ENCODE measurements at regions of chr11 and their contacts with region 1.

Region 1: GRCh38 chr11:123231256-123231655 is 36.2 kb upstream of the CLMP start:
- DNase-seq: peak; percentile 83 to 90
- H3K4me3 ChIP-seq: no peak overlapping the region
- H3K4me3 Mint-ChIP-seq: peak overlapping the region; percentile 6
- H3K27ac Mint-ChIP-seq: peak overlapping the region; percentile 81
- H3K4me1 ChIP-seq: peaks cover 55% of the 10 kb centered on the region
- H3K4me1 Mint-ChIP-seq: peaks cover 24% of the 10 kb centered on the region
- H3K27me3 ChIP-seq: no peaks in the 10 kb centered on the region
- H3K27me3 Mint-ChIP-seq: no peaks in the 10 kb centered on the region
- CTCF ChIP-seq: no peak

Region 2: GRCh38 chr11:123129920-123130319 is 101.3 kb before region 1 on chr11:
- CTCF ChIA-PET with region 1: no interaction called
- POLR2A ChIA-PET with region 1: no interaction called
- intact Hi-C with region 1: no loop called
- DNase-seq: no peak
- H3K4me3 ChIP-seq: no peak overlapping the region
- H3K4me3 Mint-ChIP-seq: no peak overlapping the region
- H3K27ac Mint-ChIP-seq: no peak overlapping the region
- H3K4me1 ChIP-seq: no peaks in the 10 kb centered on the region
- H3K4me1 Mint-ChIP-seq: no peaks in the 10 kb centered on the region
- H3K27me3 ChIP-seq: no peaks in the 10 kb centered on the region
- H3K27me3 Mint-ChIP-seq: no peaks in the 10 kb centered on the region
- CTCF ChIP-seq: no peak

Region 3: DNA sequence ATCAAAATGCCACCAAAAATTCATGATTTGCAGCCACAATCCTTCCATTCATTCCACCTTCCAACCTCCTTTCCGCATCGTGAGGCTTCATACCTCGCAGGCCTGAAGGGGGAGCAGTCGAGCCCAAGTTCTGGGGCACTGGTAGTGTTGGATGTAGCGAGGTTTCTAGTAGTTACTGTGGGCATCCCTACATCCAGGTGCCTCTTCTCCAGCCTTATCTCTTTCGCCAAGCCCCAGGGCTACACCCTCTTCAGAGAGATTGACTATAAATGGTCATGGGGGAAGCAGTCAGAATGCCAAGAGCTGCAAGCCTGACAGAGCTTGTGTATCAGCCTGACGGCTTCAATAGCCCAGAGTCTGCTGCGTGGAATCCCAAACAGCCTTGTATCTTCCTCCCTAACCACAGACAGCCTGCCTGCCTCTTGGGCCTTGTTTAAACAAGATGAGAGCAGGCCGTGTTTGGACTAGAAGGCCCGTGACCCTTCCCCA is 65.1 kb before region 1 on chr11:
- CTCF ChIA-PET with region 1: interaction called, 5 read pairs
- POLR2A ChIA-PET with region 1: interaction called, 5 read pairs
- intact Hi-C with region 1: loop called (anchors 1 kb)
- DNase-seq: peak; percentile 79 to 84
- H3K4me3 ChIP-seq: no peak overlapping the region
- H3K4me3 Mint-ChIP-seq: no peak overlapping the region
- H3K27ac Mint-ChIP-seq: peak overlapping the region; percentile 33
- H3K4me1 ChIP-seq: no peaks in the 10 kb centered on the region
- H3K4me1 Mint-ChIP-seq: peaks cover 10% of the 10 kb centered on the region
- H3K27me3 ChIP-seq: no peaks in the 10 kb centered on the region
- H3K27me3 Mint-ChIP-seq: no peaks in the 10 kb centered on the region
- CTCF ChIP-seq: peak; percentile 80 to 90

Region 4: DNA sequence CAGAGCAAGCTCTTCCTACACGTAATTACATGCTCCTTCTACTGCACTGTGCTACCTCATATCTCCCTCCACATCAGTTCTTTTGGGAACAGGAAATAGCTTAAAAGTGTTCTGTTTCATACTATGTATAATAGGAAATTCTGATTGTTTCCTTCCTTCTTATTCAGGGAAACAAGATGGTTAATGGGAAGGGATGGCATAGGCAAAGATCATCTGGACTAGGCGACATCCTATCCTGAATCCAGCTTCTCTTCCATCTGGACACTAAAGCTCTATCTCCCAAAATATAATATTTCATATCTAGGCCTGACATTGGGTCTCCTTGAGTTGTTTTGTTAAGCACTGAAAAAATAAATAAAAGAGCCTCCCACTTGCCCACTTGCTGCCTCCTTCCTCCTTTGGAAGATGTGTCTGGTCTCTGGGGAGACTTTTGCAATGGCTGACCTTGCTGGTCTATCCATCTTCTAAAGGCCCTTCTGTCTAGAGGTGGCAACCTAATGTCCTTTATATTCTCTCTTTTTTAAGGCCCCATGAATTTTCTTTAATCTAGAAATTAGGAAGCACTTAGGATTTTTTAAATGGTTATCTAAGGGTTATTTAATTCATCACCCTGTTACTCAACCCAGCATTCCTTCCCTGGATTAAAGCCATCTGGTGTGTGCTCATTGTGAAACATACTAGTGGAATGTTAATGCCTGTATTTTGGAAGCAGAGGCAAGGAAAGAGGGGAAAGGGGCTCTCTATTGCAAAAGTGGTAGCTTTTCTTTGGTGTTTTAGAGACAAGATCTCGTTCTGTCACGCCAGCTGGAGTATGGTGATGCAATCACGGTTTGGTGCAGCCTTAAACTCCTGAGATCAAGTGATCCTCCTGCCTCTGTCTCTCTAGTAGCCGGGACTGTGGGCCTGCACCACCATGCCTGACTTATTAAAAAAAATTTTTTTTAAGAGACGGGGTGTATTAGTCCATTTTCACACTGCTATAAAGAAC is 56.8 kb before region 1 on chr11:
- CTCF ChIA-PET with region 1: interaction called, 6 read pairs
- POLR2A ChIA-PET with region 1: no interaction called
- intact Hi-C with region 1: loop called (anchors 1 kb)
- DNase-seq: peak; percentile 69 to 78
- H3K4me3 ChIP-seq: no peak overlapping the region
- H3K4me3 Mint-ChIP-seq: no peak overlapping the region
- H3K27ac Mint-ChIP-seq: peak overlapping the region; percentile 91
- H3K4me1 ChIP-seq: peaks cover 18% of the 10 kb centered on the region
- H3K4me1 Mint-ChIP-seq: peaks cover 13% of the 10 kb centered on the region
- H3K27me3 ChIP-seq: no peaks in the 10 kb centered on the region
- H3K27me3 Mint-ChIP-seq: no peaks in the 10 kb centered on the region
- CTCF ChIP-seq: no peak

Region 5: DNA sequence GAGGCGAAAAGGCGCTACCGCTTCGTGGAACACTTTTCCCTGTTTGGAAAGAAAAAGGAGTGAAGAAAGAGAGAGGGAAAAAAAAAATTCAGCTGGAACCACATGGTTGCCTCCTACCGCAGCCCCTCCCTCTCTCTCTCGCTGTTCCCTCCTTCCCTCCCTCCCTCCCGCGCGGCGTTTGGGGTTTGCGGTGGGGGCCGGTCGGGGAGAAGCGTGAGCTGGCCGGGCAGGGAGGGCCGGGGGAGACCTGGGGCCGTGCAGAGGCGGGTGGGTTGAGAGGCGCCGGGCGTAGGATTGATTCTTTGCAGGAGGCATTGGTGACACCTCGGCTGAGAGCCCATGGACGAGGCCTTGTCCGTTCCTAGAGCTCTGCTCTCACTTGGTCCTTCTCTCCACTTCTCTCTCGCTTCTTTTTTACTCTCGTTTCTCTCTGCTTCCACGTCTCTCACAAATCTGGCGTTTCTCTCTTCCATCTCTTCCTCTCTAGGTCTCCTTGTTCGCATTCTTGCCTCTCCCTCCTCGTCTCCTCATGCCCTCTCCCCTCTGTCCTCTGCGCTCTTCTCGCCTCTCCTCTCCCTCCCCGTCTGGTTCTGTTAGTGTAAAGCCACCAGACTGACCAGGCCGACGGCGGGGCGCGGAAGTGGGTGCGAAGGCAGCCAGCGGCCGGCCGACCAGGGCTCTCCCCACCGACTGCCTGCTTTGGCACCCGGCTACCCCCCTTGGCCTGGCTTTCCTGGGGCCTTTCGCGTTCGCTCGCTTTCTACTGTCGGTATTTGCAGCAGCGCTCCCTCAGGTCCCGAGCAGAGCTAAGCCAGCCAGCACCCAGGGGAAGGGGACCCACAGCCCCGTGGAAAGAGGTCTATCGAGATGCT is 35.8 kb before region 1 on chr11 and contains the start of gene CLMP:
- CTCF ChIA-PET with region 1: no interaction called
- POLR2A ChIA-PET with region 1: interaction called, 5 read pairs
- intact Hi-C with region 1: loop called (anchors 1 kb)
- DNase-seq: peak; percentile 71 to 73
- H3K4me3 ChIP-seq: peak within 1 kb of the TSS; percentile 58
- H3K4me3 Mint-ChIP-seq: peak within 1 kb of the TSS; percentile 75
- H3K27ac Mint-ChIP-seq: peak within 1 kb of the TSS; percentile 43
- H3K4me1 ChIP-seq: peaks cover 21% of the 10 kb centered on the region
- H3K4me1 Mint-ChIP-seq: peaks cover 17% of the 10 kb centered on the region
- H3K27me3 ChIP-seq: no peaks in the 10 kb centered on the region
- H3K27me3 Mint-ChIP-seq: peaks cover 5% of the 10 kb centered on the region
- CTCF ChIP-seq: no peak
- total RNA-seq, gene CLMP: 44.0 and 58.9 TPM in 2 replicates

Region 6: DNA sequence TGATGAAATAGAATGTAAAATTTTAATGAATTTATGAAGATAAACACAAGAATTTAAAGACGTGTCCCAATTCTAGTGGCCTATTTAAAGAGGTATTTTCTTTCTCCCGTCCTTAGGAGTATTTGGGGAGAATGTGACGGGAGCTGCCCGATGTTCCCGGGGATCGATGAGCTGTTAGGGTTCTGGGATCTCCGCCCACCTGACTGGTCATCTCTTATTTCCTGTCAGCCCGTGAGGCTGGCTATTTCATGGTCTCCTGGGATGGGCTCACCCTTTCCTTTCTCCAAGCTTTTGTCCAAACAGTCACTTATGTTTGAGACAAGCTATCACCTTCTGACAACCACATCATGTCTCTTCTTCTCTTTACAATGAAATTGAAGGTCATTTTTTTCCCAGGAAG is 19.3 kb before region 1 on chr11:
- CTCF ChIA-PET with region 1: no interaction called
- POLR2A ChIA-PET with region 1: no interaction called
- intact Hi-C with region 1: loop called (anchors 2 kb)
- DNase-seq: no peak
- H3K4me3 ChIP-seq: no peak overlapping the region
- H3K4me3 Mint-ChIP-seq: no peak overlapping the region
- H3K27ac Mint-ChIP-seq: no peak overlapping the region
- H3K4me1 ChIP-seq: peaks cover 14% of the 10 kb centered on the region
- H3K4me1 Mint-ChIP-seq: peaks cover 24% of the 10 kb centered on the region
- H3K27me3 ChIP-seq: no peaks in the 10 kb centered on the region
- H3K27me3 Mint-ChIP-seq: no peaks in the 10 kb centered on the region
- CTCF ChIP-seq: no peak

Region 7: GRCh38 chr11:123218451-123218850 is 12.8 kb before region 1 on chr11:
- CTCF ChIA-PET with region 1: interaction called, 5 read pairs
- POLR2A ChIA-PET with region 1: interaction called, 3 read pairs
- intact Hi-C with region 1: loop called (anchors 1 kb)
- DNase-seq: no peak
- H3K4me3 ChIP-seq: no peak overlapping the region
- H3K4me3 Mint-ChIP-seq: peak overlapping the region; percentile 32
- H3K27ac Mint-ChIP-seq: peak overlapping the region; percentile 77
- H3K4me1 ChIP-seq: peaks cover 22% of the 10 kb centered on the region
- H3K4me1 Mint-ChIP-seq: peaks cover 47% of the 10 kb centered on the region
- H3K27me3 ChIP-seq: no peaks in the 10 kb centered on the region
- H3K27me3 Mint-ChIP-seq: no peaks in the 10 kb centered on the region
- CTCF ChIP-seq: no peak

Region 8: DNA sequence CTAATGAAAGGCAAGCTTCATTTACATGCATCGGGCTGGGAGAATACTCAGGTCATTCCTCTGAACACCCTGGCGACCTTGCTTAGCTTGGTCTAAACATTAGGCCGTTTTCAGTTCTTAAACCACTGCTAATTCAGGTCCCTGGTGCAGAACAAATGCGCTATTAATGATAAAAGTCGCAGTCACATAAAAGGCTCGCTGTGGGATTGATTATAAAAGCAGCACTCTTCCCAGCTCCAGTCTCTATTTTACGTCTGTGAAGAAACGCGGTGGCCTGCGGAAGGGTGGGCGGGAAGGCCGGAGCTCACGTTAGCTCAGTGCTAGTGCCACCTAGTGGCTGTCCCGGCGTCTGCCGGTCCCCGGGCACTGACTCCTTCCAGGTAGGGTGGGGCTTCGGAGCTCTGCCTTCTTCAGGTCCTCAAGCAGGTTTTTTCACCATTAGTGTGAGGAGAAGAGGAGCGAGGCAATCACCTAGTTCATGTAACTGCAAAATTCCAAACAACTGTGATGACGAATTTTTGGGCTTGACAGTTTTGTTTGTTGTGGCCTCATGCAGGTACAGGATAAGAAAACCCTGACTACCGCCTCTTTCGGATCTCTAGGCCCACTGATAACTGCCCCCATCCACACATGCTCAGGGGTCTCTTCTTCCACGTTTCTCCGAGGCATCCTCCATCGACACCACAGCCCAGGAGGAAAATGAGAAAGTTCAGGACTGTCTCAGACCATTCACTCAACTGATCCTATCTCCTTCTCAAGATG is 30.3 kb after region 1 on chr11:
- CTCF ChIA-PET with region 1: interaction called, 10 read pairs
- POLR2A ChIA-PET with region 1: interaction called, 4 read pairs
- intact Hi-C with region 1: no loop called
- DNase-seq: peak; percentile 88 to 91
- H3K4me3 ChIP-seq: 0 out of 2 replicates have a peak overlapping the region, but pooled peaks have one; percentile 4
- H3K4me3 Mint-ChIP-seq: peak overlapping the region; percentile 62
- H3K27ac Mint-ChIP-seq: no peak overlapping the region
- H3K4me1 ChIP-seq: peaks cover 6% of the 10 kb centered on the region; the same call in 1 of the 2 replicates
- H3K4me1 Mint-ChIP-seq: no peaks in the 10 kb centered on the region
- H3K27me3 ChIP-seq: peaks cover 1% of the 10 kb centered on the region; the same call in 1 of the 2 replicates
- H3K27me3 Mint-ChIP-seq: peaks cover 18% of the 10 kb centered on the region
- CTCF ChIP-seq: peak; percentile 95 to 96